ENCODE measurements at regions of chr4 and their contacts with region 1.

Region 1: DNA sequence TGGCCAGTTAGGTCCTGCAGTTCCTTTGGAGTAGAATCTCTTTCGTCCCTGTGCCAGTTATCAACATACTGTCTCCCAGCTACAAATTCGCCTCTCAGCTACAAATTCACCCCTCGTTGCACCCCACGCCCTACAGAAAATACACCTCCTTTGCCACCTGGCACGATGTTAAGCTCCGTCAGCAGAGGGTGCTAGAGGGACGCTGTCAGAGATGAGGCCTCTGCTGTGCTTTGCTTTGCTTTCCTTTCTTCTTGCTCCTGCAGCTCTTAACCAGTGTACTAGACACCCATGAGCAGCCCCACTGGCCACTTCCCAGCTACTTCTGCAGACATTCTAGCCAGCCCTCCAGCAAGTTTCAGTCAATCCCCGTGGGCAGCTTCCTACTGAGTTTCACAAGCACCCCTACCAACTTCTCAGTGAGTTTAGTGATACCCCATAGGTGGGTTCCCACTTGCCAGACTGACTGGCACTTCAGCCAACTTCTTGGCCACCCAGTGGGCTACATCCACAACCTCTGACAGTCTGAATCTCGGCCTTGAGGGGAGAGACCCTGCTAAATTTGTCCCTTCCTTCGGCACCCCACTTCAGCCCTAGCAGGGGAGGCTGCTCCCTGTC is 21.8 kb downstream of the HAUS3 start:
- DNase-seq: no peak
- H3K4me3 ChIP-seq: no peak overlapping the region
- H3K27ac ChIP-seq: no peak overlapping the region
- H3K4me1 ChIP-seq: peaks cover 0 to 8% (median 0%) of the 10 kb centered on the region in 3 donors
- H3K27me3 ChIP-seq: no peaks in the 10 kb centered on the region
- CTCF ChIP-seq: peak; percentile 66 to 88 (median 74)
- POLR2A ChIP-seq: no peak

Region 2: DNA sequence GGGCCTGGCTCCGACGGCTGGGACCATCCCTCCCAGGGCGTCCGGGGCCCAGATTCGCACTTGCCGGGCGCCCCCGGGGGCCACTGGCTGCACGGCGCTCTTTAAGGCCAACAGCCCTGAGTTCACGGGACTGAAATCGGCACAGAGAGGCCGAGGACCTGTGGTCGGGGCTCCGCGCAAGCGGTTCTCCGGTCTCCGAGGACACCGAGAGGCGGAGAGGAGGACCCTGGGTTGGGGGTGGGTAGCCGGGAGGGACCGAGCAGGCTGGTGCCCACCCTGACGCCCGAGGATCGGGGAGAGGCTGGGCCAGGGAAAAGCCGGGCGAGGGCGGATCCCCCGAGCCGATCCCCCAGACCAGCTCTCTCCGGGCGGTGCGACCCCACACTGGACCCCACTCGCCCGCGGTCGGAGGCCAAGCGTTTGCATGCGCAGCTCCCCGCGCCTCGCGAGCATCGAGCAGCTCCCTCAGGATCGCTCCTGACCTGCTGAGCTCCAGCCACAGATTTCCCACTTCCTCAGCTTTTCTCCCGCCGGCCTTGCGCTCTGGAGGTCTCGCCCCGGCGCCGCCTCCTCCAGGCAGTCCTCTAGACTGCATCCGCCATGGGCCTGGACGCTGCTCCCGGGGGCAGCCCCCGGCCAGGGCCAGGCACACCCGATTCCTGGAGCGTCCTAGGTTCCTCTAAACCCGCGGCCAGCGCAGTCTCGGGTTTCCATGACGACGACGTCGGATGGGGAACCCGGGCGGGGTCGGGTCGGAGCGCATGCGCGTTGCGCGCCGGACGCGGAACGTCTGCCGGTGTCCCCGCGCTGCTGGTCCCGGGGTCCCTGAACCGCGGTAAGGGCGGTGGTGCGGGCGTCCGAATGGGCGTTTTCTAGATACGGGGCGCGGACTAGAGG is 178.6 kb before region 1 on chr4:
- intact Hi-C with region 1: no loop called
- DNase-seq: peak; percentile 13
- H3K4me3 ChIP-seq: peak overlapping the region; percentile 49 to 79 (median 64)
- H3K27ac ChIP-seq: peak overlapping the region in 1 of 4 donors; percentile 36
- H3K4me1 ChIP-seq: peaks cover 21 to 32% (median 24%) of the 10 kb centered on the region in 3 donors
- H3K27me3 ChIP-seq: peaks cover 8 to 83% (median 15%) of the 10 kb centered on the region in 4 donors
- CTCF ChIP-seq: no peak
- POLR2A ChIP-seq: no peak

Region 3: DNA sequence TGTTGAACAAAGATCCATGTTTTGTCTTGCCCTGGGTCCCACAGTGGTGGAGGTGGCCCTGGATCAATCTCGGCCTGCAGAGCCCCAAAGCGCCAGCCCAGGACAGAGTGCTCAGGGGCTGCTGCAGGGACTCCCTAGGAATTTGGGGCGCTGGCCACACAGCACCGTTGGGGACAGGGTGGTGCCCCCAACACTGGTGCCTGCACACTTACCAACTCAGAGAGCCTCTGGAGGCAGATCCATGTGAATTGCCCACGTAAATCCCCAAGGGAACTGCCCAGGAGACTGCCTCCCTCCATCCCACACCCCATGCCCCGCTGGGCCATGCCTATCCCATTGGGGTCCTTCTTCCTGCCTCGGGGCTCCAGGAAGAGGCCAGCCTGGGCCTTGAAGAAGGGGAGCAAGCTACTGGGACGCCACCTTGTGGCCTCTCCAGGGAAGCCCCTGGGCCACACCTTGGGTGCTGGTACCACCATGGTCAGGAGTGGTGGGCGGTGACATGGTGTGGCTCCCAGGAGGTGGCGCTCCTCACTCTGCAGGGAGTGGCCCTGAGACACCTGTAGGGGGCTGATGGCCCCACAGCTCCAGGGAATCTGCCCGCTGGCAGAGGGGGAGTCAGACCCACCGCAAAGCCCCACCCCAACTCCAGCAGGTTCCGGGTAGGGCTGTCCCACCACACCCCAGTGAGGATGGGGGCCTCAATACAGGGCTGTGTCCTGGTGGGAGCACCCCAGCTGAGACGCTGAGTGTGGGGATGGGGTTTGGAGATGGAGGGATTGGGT is 221.5 kb after region 1 on chr4:
- intact Hi-C with region 1: loop called (anchors 10 kb)
- DNase-seq: no peak
- H3K4me3 ChIP-seq: no peak overlapping the region
- H3K27ac ChIP-seq: no peak overlapping the region
- H3K4me1 ChIP-seq: no peaks in the 10 kb centered on the region
- H3K27me3 ChIP-seq: no peaks in the 10 kb centered on the region
- CTCF ChIP-seq: peak; percentile 41 to 77 (median 64)
- POLR2A ChIP-seq: no peak